Thyroid gland (tissue), 4 donors: ENCODE measurements at regions of chr15 and their contacts with region 1.

Region 1: DNA sequence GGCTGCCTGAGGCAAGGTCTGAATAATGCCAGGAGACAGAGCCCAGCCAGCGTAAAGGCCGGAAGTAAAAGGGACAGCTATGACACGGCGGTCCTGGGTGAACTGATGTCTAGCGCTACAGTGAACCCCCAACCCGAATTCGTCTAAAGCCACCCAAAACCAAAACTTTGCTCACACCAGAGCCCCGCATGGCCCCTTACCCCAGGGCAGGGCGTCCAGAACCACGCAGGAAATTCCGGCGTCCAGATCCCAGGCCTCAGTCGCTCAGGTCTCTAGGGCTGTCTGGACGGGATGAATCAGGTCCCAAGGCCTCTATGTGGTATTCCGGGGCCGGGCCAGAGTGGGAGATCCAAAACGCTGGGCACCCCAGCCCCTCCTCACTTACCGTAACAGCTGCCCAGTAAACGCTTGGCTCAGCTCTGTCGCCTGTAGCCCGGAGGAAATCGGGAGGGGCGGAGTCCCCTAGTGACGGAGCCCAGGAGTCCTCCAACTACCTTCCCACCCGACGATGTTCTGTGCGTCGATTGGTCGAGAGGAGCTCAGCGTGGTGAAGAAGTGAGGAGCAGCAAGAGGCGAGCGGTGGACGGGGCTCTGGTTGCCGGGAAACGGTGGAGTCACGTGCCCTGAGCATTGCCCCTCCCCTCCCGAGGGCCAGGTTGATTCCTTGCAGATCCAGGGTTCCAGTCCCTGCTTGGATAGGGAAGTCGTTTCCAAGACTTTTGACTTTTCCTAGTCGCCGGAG is at the start of gene CCDC32:
- DNase-seq: peak; percentile 98 to 99
- H3K4me3 ChIP-seq: peak within 1 kb of the TSS; percentile 15 to 61 (median 61)
- H3K27ac ChIP-seq: peak within 1 kb of the TSS; percentile 33 to 95 (median 91)
- H3K4me1 ChIP-seq: peaks cover 9 to 19% of the 10 kb centered on the region in 2 donors
- H3K27me3 ChIP-seq: no peaks in the 10 kb centered on the region
- CTCF ChIP-seq: no peak
- POLR2A ChIP-seq: peak in 1 of 2 donors; percentile 91
- total RNA-seq, gene CCDC32: 36.8 to 49.0 (median 43.7) TPM

Region 2: GRCh38 chr15:40440743-40441564 is 123.8 kb before region 1 on chr15 and contains the start of gene BAHD1:
- intact Hi-C with region 1: loop called (anchors 5 kb)
- DNase-seq: peak; percentile 98
- H3K4me3 ChIP-seq: peak within 1 kb of the TSS; percentile 80 to 90 (median 84)
- H3K27ac ChIP-seq: peak within 1 kb of the TSS; percentile 24 to 76 (median 75)
- H3K4me1 ChIP-seq: peaks cover 38 to 57% of the 10 kb centered on the region in 2 donors
- H3K27me3 ChIP-seq: no peaks in the 10 kb centered on the region
- CTCF ChIP-seq: peak in 1 of 6 experiments; percentile 8
- POLR2A ChIP-seq: peak in 1 of 2 donors; percentile 72
- total RNA-seq, gene BAHD1: 20.0 to 50.4 (median 35.1) TPM

Region 3: DNA sequence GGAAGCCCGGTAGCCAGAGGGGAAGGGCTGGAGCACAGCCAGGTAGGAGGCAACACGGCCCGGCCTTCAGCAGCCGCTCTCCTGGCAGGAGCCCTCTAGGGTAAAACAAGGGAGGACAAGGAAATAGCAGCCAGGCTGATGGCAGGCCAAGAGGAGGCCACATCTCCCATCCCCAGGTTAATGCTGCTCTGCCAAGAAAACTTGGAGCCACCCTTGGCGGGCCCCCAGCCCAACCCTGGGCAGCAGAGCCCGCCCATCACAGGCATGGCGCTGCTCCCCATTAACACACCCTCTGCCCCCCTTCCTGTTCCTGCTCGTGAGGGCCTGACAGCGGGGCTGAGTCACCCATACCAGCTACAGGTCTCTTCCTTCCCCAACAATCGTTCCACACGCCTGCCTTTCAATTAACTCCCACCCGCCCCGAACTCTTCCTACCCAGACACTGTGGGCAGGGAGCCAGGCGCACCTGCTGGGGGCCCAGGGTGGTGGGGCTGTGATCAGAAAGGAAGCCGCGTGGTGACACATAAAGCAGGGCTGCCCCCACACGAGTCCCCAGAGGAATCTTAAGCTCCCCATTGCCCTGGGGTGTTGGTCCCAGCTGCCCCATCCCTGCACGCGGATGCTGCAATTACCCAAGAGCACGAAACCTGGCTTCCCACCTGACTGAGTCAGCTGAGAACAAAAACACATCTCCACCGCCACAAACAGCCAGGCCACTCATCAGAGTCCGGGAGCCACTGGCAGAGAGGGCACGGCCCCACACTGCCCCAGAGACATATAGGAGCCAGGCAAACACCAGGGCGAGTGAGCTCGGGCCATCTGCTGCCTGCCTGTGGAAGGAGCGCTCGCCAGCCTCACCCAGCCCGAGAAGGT is 204.7 kb after region 1 on chr15 and contains the start of gene C15orf62:
- intact Hi-C with region 1: loop called (anchors 10 kb)
- DNase-seq: peak; percentile 64 to 71
- H3K4me3 ChIP-seq: no peak within 1 kb of the TSS
- H3K27ac ChIP-seq: peak within 1 kb of the TSS in 2 of 3 donors; percentile 69 to 70
- H3K4me1 ChIP-seq: peaks cover 10 to 38% of the 10 kb centered on the region in 2 donors
- H3K27me3 ChIP-seq: no peaks in the 10 kb centered on the region
- CTCF ChIP-seq: no peak
- POLR2A ChIP-seq: no peak
- total RNA-seq, gene C15orf62: 0.13 to 0.79 (median 0.22) TPM in 3 of 4 donors, not detected in the other